Activated naive CD4-positive, alpha-beta T cell treated with anti-CD3 and anti-CD28 coated beads for 36 hours (primary cell): ENCODE measurements at regions of chr5 and their contacts with region 1.

Region 1: DNA sequence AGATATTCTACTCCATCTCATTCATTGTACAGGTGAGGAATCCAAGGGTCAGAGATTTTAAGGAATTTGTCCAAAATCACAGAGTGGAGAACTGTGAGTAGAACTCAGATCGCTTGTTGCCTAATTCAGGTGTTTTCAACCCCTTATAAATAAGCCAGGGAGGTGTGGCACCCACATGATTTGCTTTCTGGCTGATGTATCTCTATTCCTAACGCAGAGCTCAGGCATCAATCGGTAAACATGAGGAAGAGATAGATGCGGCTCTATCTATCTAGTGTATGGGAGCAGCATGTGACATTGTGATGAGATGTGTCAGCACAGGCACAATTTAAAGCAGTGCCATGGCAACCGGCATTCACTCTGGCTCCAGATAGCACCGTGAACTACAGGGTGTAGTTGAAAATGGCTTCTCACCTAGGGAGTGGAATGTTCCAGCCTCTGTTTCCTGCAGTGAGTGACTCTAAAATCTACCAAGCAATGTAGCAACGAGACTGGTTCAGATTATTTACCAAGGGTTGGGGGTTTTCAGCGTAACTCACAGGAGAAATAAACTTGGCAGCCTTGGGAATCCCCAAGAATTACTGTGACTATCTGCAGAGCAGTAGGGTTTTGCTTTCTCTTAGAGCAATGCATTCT is 53.4 kb upstream of the SUB1 start:
- DNase-seq: peak; percentile 78
- H3K4me3 Mint-ChIP-seq: peak overlapping the region; percentile 83
- H3K27ac Mint-ChIP-seq: peak overlapping the region; percentile 98
- H3K4me1 Mint-ChIP-seq: peaks cover 41% of the 10 kb centered on the region
- H3K27me3 Mint-ChIP-seq: no peaks in the 10 kb centered on the region

Region 2: GRCh38 chr5:32210151-32210550 is 321.9 kb before region 1 on chr5:
- CTCF ChIA-PET with region 1: no interaction called
- intact Hi-C with region 1: loop called (anchors 5 kb)
- DNase-seq: no peak
- H3K4me3 Mint-ChIP-seq: no peak overlapping the region
- H3K27ac Mint-ChIP-seq: peak overlapping the region; percentile 91
- H3K4me1 Mint-ChIP-seq: peaks cover 19% of the 10 kb centered on the region
- H3K27me3 Mint-ChIP-seq: no peaks in the 10 kb centered on the region

Region 3: DNA sequence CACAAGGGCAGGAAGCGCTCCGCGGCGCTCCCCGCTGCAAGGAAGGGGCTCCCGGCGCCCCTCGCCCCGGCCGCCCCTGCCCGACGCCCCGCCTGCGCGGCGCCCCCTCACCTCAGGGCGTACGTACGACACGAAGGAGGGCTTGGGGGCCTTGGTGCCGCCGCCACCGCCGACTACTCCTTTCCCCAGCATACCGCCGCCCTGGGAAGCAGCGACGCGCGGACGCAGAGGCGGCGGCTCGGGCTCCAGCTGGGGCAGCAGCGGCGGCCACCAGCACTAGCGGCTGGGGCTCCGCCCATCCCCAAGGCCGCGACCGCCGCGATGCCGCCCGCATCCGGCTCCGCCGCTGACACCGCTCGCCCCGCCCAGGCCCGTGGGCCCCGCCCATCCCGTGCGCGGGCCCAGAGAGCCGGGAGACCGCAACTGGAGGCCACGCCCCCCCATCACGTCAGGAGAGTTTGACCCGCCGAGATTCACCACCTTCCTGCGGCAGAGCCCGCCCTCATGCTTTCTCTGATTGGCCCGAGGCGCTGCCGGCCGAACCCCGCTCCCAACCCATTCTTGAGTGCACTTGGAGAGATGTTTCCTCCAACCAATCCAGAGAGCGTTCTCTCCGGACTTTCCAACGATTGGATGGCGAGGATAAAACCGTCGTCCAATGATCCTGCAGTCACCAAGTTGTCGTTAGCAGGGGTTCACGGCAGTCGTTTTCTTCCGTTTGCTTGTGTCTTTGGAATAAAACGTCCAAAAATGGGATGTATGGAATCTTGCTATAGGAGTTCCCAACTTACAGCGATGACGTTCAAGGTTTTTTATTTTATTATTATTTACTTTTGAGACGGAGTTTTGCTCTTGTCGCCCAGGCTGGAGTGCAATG is 219.1 kb before region 1 on chr5 and contains the start of gene MTMR12:
- CTCF ChIA-PET with region 1: no interaction called
- intact Hi-C with region 1: loop called (anchors 1 kb)
- DNase-seq: peak; percentile 100
- H3K4me3 Mint-ChIP-seq: peak within 1 kb of the TSS; percentile 84
- H3K27ac Mint-ChIP-seq: peak within 1 kb of the TSS; percentile 84
- H3K4me1 Mint-ChIP-seq: peaks cover 27% of the 10 kb centered on the region
- H3K27me3 Mint-ChIP-seq: no peaks in the 10 kb centered on the region
- total RNA-seq, gene MTMR12: 14.1 to 16.0 TPM

Region 4: GRCh38 chr5:32462618-32463017 is 69.4 kb before region 1 on chr5:
- CTCF ChIA-PET with region 1: no interaction called
- intact Hi-C with region 1: loop called (anchors 2 kb)
- DNase-seq: peak; percentile 71
- H3K4me3 Mint-ChIP-seq: no peak overlapping the region
- H3K27ac Mint-ChIP-seq: peak overlapping the region; percentile 89
- H3K4me1 Mint-ChIP-seq: peaks cover 13% of the 10 kb centered on the region
- H3K27me3 Mint-ChIP-seq: no peaks in the 10 kb centered on the region

Region 5: DNA sequence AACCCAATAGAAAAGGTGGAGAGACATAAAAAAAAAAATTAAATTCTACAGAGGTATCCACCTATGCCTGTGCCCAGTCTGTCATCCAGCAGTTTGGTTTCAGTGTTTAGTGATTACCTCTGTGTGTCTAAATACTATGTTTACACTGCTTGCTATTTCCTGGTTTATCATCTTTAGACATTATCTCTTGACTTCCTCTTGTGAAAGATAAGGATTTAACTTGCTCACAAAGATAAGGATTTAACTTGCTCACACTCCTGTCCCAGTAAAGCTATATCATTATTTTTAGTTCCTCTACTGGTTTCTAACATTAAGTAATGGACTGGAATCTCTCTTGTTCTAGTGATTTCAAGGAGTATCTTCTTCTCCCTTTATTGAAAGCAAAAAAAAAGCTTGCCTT is 33.5 kb before region 1 on chr5:
- CTCF ChIA-PET with region 1: no interaction called
- intact Hi-C with region 1: loop called (anchors 1 kb)
- DNase-seq: no peak
- H3K4me3 Mint-ChIP-seq: no peak overlapping the region
- H3K27ac Mint-ChIP-seq: no peak overlapping the region
- H3K4me1 Mint-ChIP-seq: peaks cover 12% of the 10 kb centered on the region
- H3K27me3 Mint-ChIP-seq: no peaks in the 10 kb centered on the region